ENCODE measurements at regions of chr1 and their contacts with region 1.

Region 1: DNA sequence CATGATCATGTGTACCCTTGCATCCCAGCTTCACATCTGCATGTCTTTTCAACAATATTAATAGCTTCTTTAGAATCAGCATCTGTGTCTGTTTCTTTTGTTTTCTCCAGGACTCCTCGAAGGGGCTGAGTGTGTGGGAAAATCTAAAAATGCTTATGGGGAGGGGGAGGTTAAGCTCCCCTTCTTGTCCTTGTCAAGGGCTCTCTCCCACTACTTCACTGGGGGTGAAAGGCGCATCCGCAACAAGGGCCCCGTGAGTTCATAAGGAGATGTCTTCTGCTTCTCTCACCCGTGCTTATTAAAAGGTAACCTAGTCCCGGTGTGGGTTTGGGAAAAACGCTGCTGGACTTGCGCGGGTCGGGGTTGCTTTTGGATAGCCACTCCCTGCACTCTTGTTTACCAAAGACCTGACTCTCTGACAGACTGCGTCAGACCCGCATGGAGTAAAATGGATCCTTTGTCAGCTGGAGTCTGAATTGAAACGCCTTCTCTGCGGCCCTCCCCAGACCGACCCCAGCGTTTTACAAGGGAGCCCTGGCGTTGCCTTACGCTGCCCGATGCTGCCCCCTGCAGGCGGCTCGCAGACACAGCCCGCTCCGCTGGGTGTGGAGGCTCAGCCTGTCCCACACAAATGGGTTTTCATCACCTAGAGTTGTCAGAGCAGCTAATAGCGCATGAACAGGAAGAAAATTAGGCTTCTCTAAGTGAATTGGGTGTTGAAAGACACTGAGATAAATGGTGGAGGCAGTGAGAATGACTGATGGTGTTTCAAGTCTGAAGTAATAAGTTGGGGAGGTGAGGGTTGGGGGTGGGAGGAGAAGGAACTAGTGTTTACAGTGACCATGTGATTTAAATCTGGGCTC is 53.8 kb downstream of the IER5 start:
- DNase-seq: peak; percentile 95
- ATAC-seq: peak; percentile 73
- H3K4me3 Mint-ChIP-seq: peak overlapping the region; percentile 33
- H3K27ac Mint-ChIP-seq: peak overlapping the region; percentile 85
- H3K4me1 Mint-ChIP-seq: peaks cover 46% of the 10 kb centered on the region
- H3K27me3 Mint-ChIP-seq: peaks cover 3% of the 10 kb centered on the region

Region 2: GRCh38 chr1:180631766-180632325 is 510.5 kb before region 1 on chr1 and contains the start of gene XPR1:
- CTCF ChIA-PET with region 1: no interaction called
- POLR2A ChIA-PET with region 1: no interaction called
- intact Hi-C with region 1: loop called (anchors 10 kb)
- DNase-seq: peak; percentile 99
- ATAC-seq: peak; percentile 99
- H3K4me3 Mint-ChIP-seq: no peak within 1 kb of the TSS
- H3K27ac Mint-ChIP-seq: peak within 1 kb of the TSS; percentile 76
- H3K4me1 Mint-ChIP-seq: peaks cover 9% of the 10 kb centered on the region
- H3K27me3 Mint-ChIP-seq: peaks cover 3% of the 10 kb centered on the region
- total RNA-seq, gene XPR1: 18.4 to 25.2 TPM

Region 3: DNA sequence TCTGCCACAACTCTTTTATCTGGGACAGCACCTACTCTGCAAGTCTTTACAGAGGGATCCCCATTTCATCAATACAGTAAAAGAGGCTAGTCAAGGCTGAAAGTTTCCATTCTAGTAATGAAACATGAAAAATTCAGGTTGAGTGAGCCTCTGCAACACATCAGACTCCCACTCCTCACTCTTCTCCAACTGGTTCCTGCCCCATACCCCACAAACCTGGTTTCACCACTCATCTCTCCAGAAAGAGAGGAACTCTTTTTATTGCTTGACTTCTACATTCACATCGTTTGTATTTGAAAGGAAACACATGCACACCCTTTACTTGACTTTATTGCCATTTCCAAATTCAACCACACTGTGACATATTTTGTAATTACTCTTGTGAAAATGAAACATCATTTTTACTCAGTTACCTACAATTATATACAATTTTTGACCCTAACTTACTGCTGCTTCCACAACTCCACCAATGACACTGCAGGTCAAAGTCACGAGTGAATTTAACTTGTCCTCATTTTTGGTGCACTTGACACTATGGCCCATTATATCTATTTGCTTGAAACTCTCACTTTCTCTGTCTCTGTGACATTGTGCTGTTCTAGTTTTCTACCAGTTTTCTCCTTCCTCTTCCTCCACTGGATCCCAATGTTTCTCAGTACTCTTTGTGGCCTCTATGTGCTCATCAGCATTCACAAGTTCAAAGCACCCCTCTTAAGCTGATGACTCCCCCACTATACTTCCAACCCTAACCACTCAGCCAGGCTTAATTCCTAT is 127.7 kb before region 1 on chr1:
- CTCF ChIA-PET with region 1: interaction called, 6 read pairs
- POLR2A ChIA-PET with region 1: no interaction called
- intact Hi-C with region 1: loop called in 1 of 2 experiments (anchors 2 kb)
- DNase-seq: peak; percentile 54
- ATAC-seq: peak; percentile 78
- H3K4me3 Mint-ChIP-seq: no peak overlapping the region
- H3K27ac Mint-ChIP-seq: no peak overlapping the region
- H3K4me1 Mint-ChIP-seq: peaks cover 46% of the 10 kb centered on the region
- H3K27me3 Mint-ChIP-seq: no peaks in the 10 kb centered on the region

Region 4: DNA sequence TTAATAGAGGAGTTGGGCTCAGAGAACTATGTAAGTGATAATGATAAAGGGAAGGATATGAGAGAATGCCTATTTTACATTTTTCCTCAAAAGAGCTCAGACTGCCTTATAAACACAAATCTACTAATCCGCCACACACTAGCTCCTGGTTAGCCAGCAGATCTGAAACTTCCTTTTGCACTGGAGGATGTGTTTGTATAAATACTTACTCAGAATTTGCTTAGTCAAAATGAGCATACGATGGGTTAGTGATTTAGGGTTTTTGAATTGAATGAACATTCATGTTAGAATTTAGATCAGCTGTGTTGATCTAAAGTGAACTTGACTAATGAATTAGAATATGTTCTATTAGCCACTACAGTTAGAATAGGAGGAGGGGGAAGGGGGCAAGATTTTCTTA is 62.9 kb before region 1 on chr1:
- CTCF ChIA-PET with region 1: interaction called, 33 read pairs
- POLR2A ChIA-PET with region 1: interaction called, 3 read pairs
- intact Hi-C with region 1: loop called (anchors 1 kb)
- DNase-seq: no peak
- ATAC-seq: peak; percentile 45
- H3K4me3 Mint-ChIP-seq: no peak overlapping the region
- H3K27ac Mint-ChIP-seq: peak overlapping the region; percentile 3
- H3K4me1 Mint-ChIP-seq: peaks cover 10% of the 10 kb centered on the region
- H3K27me3 Mint-ChIP-seq: peaks cover 19% of the 10 kb centered on the region

Region 5: GRCh38 chr1:181105134-181106021 is 36.9 kb before region 1 on chr1:
- CTCF ChIA-PET with region 1: interaction called, 156 read pairs
- POLR2A ChIA-PET with region 1: interaction called, 15 read pairs
- intact Hi-C with region 1: loop called in 1 of 2 experiments (anchors 1 kb)
- DNase-seq: peak; percentile 95
- ATAC-seq: peak; percentile 83
- H3K4me3 Mint-ChIP-seq: peak overlapping the region; percentile 72
- H3K27ac Mint-ChIP-seq: peak overlapping the region; percentile 55
- H3K4me1 Mint-ChIP-seq: peaks cover 59% of the 10 kb centered on the region
- H3K27me3 Mint-ChIP-seq: peaks cover 15% of the 10 kb centered on the region

Region 6: DNA sequence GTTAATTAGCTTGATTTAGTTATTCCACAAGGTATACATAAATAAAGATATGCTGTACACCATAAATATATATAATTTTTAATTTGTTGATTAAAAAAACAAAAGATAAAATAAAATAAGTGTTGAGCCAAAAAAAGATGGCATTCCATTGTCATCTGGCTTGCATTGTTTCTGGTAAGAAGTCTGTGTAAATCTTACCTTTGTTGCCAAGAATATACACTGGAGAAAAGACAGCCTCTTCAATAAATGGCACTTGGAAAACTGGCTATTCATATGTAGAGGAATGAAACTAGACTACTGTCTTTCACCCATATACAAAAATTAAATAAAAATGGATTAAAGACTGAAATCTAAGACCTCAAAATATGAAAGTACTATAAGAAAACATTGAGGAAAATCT is 142.7 kb after region 1 on chr1:
- CTCF ChIA-PET with region 1: no interaction called
- POLR2A ChIA-PET with region 1: no interaction called
- intact Hi-C with region 1: no loop called
- DNase-seq: no peak
- ATAC-seq: no peak
- H3K4me3 Mint-ChIP-seq: no peak overlapping the region
- H3K27ac Mint-ChIP-seq: no peak overlapping the region
- H3K4me1 Mint-ChIP-seq: no peaks in the 10 kb centered on the region
- H3K27me3 Mint-ChIP-seq: peaks cover 16% of the 10 kb centered on the region